H1 (cell line): ENCODE measurements at regions of chr3 and their contacts with region 1.

Region 1: DNA sequence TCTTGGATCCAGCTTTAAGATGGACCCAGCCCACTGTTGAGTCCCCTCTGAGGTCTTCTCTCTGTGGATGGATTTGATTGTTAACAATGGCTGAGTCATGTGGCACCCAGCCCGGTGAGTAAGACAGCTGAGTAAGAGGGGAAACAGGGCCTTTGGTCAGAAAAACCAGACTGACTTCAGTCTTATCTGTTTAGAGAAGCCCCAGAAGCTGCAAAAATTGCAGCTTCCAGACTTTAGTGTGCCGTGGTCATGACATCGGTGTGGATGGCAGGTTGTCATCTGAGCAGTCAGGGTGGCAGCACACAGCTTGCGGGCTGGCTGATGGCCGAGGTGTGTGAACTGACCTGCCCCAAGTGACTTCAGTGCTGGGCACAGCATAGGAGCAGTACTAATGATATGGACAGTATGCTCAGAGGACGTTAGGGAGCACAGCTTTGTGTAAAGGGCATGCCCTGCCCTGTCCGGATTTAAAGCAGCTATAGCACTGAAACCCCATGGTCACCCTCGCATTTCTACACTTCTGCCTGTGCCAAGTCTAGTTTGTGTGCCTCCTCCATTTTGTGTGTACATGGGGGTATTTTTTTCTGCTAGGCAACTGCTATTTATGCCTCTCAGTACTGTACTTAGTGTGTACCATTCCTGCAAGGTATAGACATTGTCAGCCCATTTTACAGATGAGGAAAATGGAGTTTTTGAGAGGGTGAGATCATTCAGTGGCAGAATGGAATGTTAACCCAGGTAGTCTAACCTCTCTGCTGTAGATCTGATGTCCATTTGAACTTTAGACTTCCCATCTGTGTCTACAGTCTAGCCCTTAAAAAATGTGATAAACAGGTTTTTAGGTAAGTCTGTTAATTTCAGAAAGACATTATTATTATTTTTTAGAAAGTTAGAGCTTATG is 44.4 kb downstream of the FLNB start:
- DNase-seq: no peak
- H3K4me3 ChIP-seq: no peak overlapping the region
- H3K27ac ChIP-seq: no peak overlapping the region
- H3K4me1 ChIP-seq: peaks cover 11 to 25% (median 19%) of the 10 kb centered on the region in 4 experiments
- H3K27me3 ChIP-seq: no peaks in the 10 kb centered on the region
- CTCF ChIP-seq: no peak
- EP300 ChIP-seq: no peak
- POLR2A ChIP-seq: no peak
- RAD21 ChIP-seq: no peak

Region 2: GRCh38 chr3:57918123-57918837 is 134.3 kb before region 1 on chr3:
- CTCF ChIA-PET with region 1: no interaction called
- POLR2A ChIA-PET with region 1: no interaction called
- DNase-seq: no peak
- H3K4me3 ChIP-seq: no peak overlapping the region
- H3K27ac ChIP-seq: no peak overlapping the region
- H3K4me1 ChIP-seq: no peaks in the 10 kb centered on the region
- H3K27me3 ChIP-seq: no peaks in the 10 kb centered on the region
- CTCF ChIP-seq: no peak
- EP300 ChIP-seq: no peak
- POLR2A ChIP-seq: no peak
- RAD21 ChIP-seq: no peak

Region 3: DNA sequence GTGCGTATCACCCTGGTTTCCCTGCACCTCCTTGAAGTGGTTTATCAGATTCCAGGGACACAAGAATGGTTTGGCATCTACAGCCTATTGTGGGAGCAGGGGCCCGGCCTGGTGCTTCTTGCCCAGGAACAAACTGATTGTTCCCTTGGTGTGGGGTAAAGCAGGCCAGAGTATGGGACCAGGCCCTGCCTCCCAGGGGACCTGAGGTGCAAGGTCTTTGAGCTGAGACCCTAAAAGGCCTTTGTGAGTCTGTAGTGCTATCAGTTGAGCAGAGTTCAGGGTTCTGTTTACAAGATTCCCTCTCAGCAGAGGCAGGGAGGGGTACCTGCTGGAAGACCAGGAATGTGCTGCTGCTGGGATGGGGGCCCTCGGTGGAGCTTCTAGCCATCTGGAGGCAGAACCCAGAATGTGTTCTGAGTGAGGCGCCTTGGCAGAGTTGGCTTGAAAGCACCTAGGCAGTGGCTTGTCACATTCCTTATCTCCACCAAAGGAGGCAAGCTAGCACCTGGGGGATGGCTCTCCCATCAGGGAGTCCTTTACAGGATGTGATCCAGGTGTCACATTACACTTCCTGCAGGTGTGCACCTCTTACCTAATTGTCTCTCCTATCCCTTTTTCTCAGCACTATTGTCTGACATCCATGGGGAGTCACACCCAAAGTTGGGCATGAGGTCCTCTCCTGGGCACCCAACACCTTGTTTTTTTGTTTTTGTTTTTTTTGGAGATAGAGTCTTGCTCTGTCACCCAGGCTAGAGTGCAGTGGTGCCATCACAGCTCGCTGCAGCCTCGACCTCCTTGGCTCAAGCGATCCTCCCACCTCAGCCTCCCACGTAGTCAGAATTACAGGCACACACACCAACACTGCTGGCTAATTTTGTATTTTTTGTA is 31.3 kb before region 1 on chr3:
- CTCF ChIA-PET with region 1: interaction called, 17 read pairs
- POLR2A ChIA-PET with region 1: interaction called, 7 read pairs
- DNase-seq: peak in 1 of 2 experiments; percentile 72
- H3K4me3 ChIP-seq: peak overlapping the region in 3 of 4 experiments; percentile 5 to 11 (median 7); a peak in 3 of 8 replicates
- H3K27ac ChIP-seq: peak overlapping the region; percentile 88
- H3K4me1 ChIP-seq: peaks cover 16 to 44% (median 33%) of the 10 kb centered on the region in 4 experiments
- H3K27me3 ChIP-seq: no peaks in the 10 kb centered on the region
- CTCF ChIP-seq: peak in 2 of 3 experiments; percentile 27 to 36; a peak in 2 of 4 replicates
- EP300 ChIP-seq: peak in 1 of 2 experiments; percentile 71; a peak in 1 of 3 replicates
- POLR2A ChIP-seq: peak in 1 of 2 experiments; percentile 69; a peak in 1 of 3 replicates
- RAD21 ChIP-seq: peak; percentile 34 to 57; a peak in 2 of 4 replicates

Region 4: GRCh38 chr3:58041654-58042324 is 10.8 kb before region 1 on chr3:
- CTCF ChIA-PET with region 1: interaction called, 14 read pairs
- POLR2A ChIA-PET with region 1: interaction called, 12 read pairs
- DNase-seq: peak in 1 of 2 experiments; percentile 47
- H3K4me3 ChIP-seq: no peak overlapping the region
- H3K27ac ChIP-seq: peak overlapping the region; percentile 55; the same call in 1 of the 2 replicates
- H3K4me1 ChIP-seq: peaks cover 20 to 43% (median 36%) of the 10 kb centered on the region in 4 experiments
- H3K27me3 ChIP-seq: no peaks in the 10 kb centered on the region
- CTCF ChIP-seq: no peak
- EP300 ChIP-seq: no peak
- POLR2A ChIP-seq: no peak
- RAD21 ChIP-seq: no peak

Region 5: GRCh38 chr3:58063022-58063815 is 10.6 kb after region 1 on chr3:
- CTCF ChIA-PET with region 1: interaction called, 17 read pairs
- POLR2A ChIA-PET with region 1: interaction called, 9 read pairs
- DNase-seq: no peak
- H3K4me3 ChIP-seq: no peak overlapping the region
- H3K27ac ChIP-seq: no peak overlapping the region
- H3K4me1 ChIP-seq: peaks cover 15 to 42% (median 23%) of the 10 kb centered on the region in 4 experiments
- H3K27me3 ChIP-seq: no peaks in the 10 kb centered on the region
- CTCF ChIP-seq: no peak
- EP300 ChIP-seq: no peak
- POLR2A ChIP-seq: no peak
- RAD21 ChIP-seq: no peak